ENCODE measurements at regions of chr1 and their contacts with region 1.

Region 1: GRCh38 chr1:40032240-40032891 is 8.2 kb upstream of the CAP1 start:
- DNase-seq: no peak
- H3K4me3 ChIP-seq: no peak overlapping the region
- H3K27ac ChIP-seq: no peak overlapping the region
- H3K27me3 ChIP-seq: no peaks in the 10 kb centered on the region
- CTCF ChIP-seq: peak; percentile 70

Region 2: DNA sequence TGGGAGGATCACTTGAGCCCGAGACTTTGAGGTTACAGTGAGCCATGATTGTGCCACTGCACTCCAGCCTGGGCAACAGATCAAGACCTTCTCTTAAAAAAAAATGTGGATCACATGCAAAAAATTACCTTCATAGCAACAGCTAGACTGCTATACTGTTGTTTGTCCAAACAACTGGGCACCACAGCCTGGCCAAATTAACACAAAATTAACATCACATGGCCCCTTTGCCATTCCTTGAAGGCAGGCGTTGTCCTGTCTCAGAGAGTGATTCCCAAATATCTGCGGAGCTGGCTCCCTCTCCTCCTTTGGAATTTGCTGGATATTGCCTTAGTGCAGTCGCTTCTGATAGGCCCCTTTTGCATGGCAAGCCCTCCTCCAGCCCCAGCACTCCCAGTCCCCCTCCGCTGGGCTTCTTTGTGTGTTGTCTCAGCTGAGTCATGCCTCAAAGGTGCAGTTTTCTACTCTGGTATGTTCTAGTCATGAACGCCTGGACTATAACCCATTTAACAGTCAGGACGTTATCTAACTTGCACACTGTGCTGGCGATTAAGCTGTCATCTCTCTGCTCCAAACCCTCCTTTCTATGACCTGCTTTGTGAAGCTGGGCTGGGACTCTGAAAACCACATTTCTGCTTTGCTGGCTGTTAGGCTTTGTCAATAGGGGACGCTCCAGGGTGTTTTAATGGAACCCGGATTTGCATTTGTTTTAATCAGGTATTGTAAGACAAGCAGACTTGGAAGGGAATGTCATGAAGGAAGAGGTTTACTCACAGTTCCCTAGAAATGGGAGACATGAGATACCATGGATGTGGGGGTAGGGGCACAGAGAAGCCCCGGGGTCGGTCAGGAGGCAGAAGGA is 321.0 kb before region 1 on chr1:
- CTCF ChIA-PET with region 1: no interaction called
- POLR2A ChIA-PET with region 1: no interaction called
- DNase-seq: no peak
- H3K4me3 ChIP-seq: no peak overlapping the region
- H3K27ac ChIP-seq: no peak overlapping the region
- H3K27me3 ChIP-seq: peaks cover 37% of the 10 kb centered on the region
- CTCF ChIP-seq: no peak

Region 3: GRCh38 chr1:39816415-39817090 is 215.8 kb before region 1 on chr1:
- CTCF ChIA-PET with region 1: interaction called, 33 read pairs
- POLR2A ChIA-PET with region 1: interaction called, 4 read pairs
- DNase-seq: peak; percentile 23
- H3K4me3 ChIP-seq: no peak overlapping the region
- H3K27ac ChIP-seq: no peak overlapping the region
- H3K27me3 ChIP-seq: peaks cover 12% of the 10 kb centered on the region
- CTCF ChIP-seq: peak; percentile 82

Region 4: DNA sequence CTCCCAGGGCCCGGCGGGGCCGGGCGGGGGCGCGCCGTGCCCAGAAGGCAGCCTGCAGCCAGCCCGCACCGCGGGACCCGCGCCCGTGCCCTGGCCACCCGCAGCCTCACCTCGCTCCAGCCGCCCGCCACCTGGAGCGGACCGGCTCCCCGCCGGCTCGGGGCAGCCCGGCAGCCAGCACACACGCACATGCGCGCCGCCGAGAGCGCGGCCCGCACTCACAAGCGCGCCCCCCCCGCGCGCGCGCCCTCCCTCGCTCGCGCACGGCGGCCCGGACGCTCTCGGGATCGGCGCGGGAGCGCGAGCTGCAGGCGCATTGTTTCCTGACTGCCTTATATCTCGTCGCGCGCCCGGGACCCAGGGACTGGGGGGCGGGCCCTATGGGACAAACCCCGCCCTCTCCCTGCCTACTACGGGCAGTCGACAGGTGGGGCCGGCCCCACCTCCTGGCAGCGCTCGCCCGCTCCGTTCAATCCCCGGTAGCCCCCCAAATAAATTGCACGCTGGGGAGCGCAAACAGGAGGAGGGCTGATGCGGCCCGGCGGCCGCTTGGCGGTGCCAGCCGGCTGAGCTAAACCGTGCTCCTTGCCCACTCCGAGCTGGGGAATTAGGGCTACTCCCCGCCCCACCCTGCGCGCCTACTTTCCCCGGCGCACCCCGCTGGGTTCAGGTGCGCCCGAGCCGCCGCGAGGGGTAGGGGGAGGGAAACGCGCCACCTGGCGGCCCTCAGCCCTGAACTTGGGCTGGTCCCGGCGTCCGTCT is 130.5 kb before region 1 on chr1 and contains the start of gene MYCL:
- CTCF ChIA-PET with region 1: interaction called, 11 read pairs
- POLR2A ChIA-PET with region 1: no interaction called
- DNase-seq: no peak
- H3K4me3 ChIP-seq: peak within 1 kb of the TSS; percentile 66
- H3K27ac ChIP-seq: no peak within 1 kb of the TSS
- H3K27me3 ChIP-seq: peaks cover 21% of the 10 kb centered on the region
- CTCF ChIP-seq: peak; percentile 63
- polyA plus RNA-seq, gene MYCL: 0.66 and 0.77 TPM in 2 replicates

Region 5: GRCh38 chr1:40003156-40004148 is 28.9 kb before region 1 on chr1:
- CTCF ChIA-PET with region 1: interaction called, 18 read pairs
- POLR2A ChIA-PET with region 1: no interaction called
- DNase-seq: no peak
- H3K4me3 ChIP-seq: no peak overlapping the region
- H3K27ac ChIP-seq: no peak overlapping the region
- H3K27me3 ChIP-seq: no peaks in the 10 kb centered on the region
- CTCF ChIP-seq: no peak

Region 6: DNA sequence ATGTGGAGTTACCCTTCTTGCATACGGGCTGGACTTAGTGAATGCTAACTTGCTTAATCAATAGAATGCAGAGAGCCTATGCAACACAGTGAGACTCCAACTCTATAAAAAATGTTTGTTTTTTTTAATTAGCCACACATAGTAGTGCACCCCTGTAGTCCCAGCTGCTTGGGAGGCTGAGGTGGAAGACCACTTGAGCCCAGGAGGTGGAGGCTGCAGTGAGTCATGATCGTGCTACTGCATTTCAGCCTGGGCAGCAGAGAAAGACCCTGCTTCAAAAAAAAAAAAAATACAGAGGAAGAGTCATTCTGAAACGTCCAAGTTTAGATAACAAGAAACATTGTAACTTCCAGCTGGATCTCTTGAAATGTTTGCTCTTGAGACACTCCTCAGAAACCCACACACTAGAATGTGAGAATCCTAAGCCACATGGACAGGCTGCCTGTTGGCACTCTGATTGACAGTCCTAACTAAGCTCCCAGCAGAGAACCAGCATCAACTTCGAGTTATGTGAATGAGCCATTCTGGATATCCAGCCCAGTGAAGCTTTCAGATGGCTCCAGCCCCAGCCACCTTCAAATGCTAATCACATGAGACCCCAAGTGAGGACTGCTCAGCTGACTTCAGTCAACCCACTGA is 11.8 kb before region 1 on chr1:
- CTCF ChIA-PET with region 1: interaction called, 21 read pairs
- POLR2A ChIA-PET with region 1: interaction called, 3 read pairs
- DNase-seq: no peak
- H3K4me3 ChIP-seq: no peak overlapping the region
- H3K27ac ChIP-seq: no peak overlapping the region
- H3K27me3 ChIP-seq: no peaks in the 10 kb centered on the region
- CTCF ChIP-seq: no peak

Region 7: DNA sequence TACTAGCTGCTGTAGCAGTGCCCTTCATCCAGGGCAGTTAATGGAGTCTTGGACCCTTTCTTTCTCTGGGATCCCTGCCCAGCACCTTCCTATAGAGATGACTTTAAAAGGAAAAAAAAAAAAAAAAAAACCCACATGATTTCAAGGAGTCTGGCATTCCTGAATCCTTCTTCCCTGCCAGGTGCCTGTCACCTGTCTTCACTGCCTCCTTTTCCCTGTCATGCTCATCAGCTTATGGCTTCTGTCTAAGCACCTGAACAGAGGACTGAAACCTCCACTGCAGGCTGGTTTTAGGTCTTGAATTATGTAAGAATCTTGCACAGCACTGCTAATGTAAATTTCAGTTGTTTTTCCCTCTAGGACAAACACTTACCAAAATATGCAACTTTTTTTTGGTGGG is 39.8 kb after region 1 on chr1:
- CTCF ChIA-PET with region 1: no interaction called
- POLR2A ChIA-PET with region 1: no interaction called
- DNase-seq: no peak
- H3K4me3 ChIP-seq: no peak overlapping the region
- H3K27ac ChIP-seq: no peak overlapping the region
- H3K27me3 ChIP-seq: no peaks in the 10 kb centered on the region
- CTCF ChIP-seq: no peak